Transverse colon (tissue), 4 donors: ENCODE measurements at regions of chr10 and their contacts with region 1.

Region 1: DNA sequence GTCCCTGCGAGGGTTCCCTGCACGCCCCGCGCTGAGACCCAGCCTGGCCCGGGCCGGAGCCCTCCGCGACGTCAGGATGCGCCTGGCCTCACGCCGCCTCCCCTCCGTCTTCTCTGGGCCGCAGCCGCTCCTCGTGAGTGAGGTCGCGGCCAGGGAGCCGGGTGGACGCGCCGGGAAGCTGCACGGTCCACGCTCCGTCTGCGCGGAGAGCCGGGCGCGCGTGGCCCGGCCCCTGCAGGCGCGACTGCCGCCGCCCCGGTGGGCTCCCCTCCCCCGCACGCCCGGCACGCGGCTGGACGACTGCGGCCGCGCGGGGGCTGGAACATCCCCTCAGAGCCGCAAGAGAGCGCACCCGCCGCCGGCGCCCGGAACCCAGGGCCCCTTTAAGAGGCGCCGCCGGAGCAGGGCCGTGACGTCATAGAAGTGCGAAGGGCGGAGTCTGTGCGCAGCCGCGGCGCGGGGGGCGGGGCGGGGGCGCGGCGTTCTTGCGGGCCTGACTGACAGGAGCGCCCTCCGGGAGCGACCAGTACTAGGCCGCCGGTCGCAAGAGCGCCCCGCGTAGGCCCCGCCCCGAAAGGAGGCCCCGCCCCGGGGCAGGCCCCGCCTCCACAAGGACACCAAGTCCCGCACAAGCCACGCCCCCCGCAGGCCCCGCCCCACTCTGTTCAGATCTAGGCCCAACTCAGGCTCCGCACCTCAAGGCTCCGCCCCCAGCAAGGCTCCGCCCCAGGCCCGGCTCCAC is 445 bp upstream of the INPP5A start:
- DNase-seq: peak; percentile 100
- H3K4me3 ChIP-seq: peak overlapping the region; percentile 53 to 69 (median 64)
- H3K27ac ChIP-seq: peak overlapping the region; percentile 87 to 95 (median 92)
- H3K4me1 ChIP-seq: peaks cover 11 to 54% (median 47%) of the 10 kb centered on the region in 4 donors
- H3K27me3 ChIP-seq: no peaks in the 10 kb centered on the region
- CTCF ChIP-seq: peak in 2 of 5 experiments; percentile 19 to 20
- EP300 ChIP-seq: no peak
- POLR2A ChIP-seq: peak; percentile 41

Region 2: GRCh38 chr10:132387764-132388210 is 149.4 kb before region 1 on chr10:
- in situ Hi-C with region 1: loop called in 2 of 4 experiments (anchors 25 kb)
- intact Hi-C with region 1: no loop called
- DNase-seq: peak; percentile 84
- H3K4me3 ChIP-seq: peak overlapping the region in 1 of 4 donors; percentile 27
- H3K27ac ChIP-seq: peak overlapping the region in 3 of 4 donors; percentile 28 to 48 (median 39)
- H3K4me1 ChIP-seq: peaks cover 5 to 13% (median 11%) of the 10 kb centered on the region in 4 donors
- H3K27me3 ChIP-seq: no peaks in the 10 kb centered on the region
- CTCF ChIP-seq: peak; percentile 60 to 81 (median 66)
- EP300 ChIP-seq: no peak
- POLR2A ChIP-seq: no peak

Region 3: DNA sequence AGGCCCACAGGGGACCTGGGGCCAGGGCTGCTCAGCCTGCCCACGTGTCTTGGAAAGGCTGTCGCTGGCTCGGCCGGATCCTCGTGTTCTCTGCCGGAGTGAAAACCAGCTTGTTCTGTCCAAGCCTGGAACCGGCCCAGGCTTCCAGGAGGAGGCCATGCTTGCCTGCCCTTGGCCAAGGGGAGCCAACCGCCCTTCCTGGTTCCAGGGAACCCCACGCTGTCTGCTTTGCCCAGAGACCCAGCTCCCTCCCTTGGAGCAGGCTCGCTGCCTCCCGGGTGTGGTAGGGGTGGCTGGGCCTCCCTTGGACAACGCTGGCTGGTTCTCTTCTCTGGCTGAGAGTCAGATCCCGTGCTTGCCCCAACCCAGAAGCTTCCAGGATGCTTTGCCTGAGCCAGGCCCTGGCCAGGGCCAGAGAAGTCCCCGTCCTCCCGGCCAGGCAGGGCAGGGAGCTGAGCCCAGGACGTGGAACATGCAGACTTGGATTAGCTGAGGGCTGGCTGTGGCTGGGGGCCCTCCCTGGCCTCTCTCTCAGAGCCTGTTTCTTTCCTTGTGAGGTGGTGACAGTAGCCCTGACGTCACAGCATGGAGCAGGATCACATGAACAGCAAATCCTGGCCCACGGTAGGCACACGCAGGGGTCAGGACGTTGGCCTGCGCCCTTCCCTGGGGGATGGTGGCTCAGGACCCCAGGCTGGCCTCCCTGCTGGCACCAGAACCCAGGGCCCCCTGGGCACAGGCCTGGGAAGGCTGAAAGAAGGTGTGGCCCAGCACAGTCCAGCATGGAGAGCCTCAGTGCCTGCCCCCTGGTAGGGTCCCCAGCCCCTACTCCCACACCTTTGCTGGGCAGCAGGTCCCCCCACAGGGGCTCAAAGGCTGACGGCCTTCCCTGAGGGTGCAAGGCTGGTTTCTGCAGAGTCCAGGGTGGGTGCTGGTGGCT is 72.6 kb before region 1 on chr10:
- in situ Hi-C with region 1: loop called in 1 of 4 experiments (anchors 10 kb)
- intact Hi-C with region 1: loop called (anchors 5 kb)
- DNase-seq: peak; percentile 68
- H3K4me3 ChIP-seq: no peak overlapping the region
- H3K27ac ChIP-seq: peak overlapping the region; percentile 87 to 91 (median 90)
- H3K4me1 ChIP-seq: peaks cover 56 to 88% (median 85%) of the 10 kb centered on the region in 4 donors
- H3K27me3 ChIP-seq: no peaks in the 10 kb centered on the region
- CTCF ChIP-seq: no peak
- EP300 ChIP-seq: no peak
- POLR2A ChIP-seq: no peak

Region 4: GRCh38 chr10:133110133-133110532 is 573.0 kb after region 1 on chr10:
- in situ Hi-C with region 1: no loop called
- intact Hi-C with region 1: no loop called
- DNase-seq: no peak
- H3K4me3 ChIP-seq: no peak overlapping the region
- H3K27ac ChIP-seq: no peak overlapping the region
- H3K4me1 ChIP-seq: no peaks in the 10 kb centered on the region
- H3K27me3 ChIP-seq: peaks cover 3% of the 10 kb centered on the region
- CTCF ChIP-seq: no peak
- EP300 ChIP-seq: no peak
- POLR2A ChIP-seq: no peak